Common myeloid progenitor, CD34-positive (primary cell): ENCODE measurements at regions of chr4 and their contacts with region 1.

Region 1: GRCh38 chr4:128191115-128191781 is 96.4 kb downstream of the PGRMC2 start:
- DNase-seq: peak; percentile 76 to 94 (median 92)
- H3K4me3 ChIP-seq: no peak overlapping the region
- H3K27ac ChIP-seq: no peak overlapping the region
- H3K4me1 ChIP-seq: no peaks in the 10 kb centered on the region
- H3K27me3 ChIP-seq: no peaks in the 10 kb centered on the region

Region 2: GRCh38 chr4:128076465-128076864 is 114.8 kb before region 1 on chr4:
- CTCF ChIA-PET with region 1: no interaction called
- POLR2A ChIA-PET with region 1: no interaction called
- DNase-seq: no peak
- H3K4me3 ChIP-seq: no peak overlapping the region
- H3K27ac ChIP-seq: no peak overlapping the region
- H3K4me1 ChIP-seq: no peaks in the 10 kb centered on the region
- H3K27me3 ChIP-seq: no peaks in the 10 kb centered on the region

Region 3: GRCh38 chr4:128204901-128205300 is 13.7 kb after region 1 on chr4:
- CTCF ChIA-PET with region 1: interaction called, 10 read pairs
- POLR2A ChIA-PET with region 1: no interaction called
- DNase-seq: no peak
- H3K4me3 ChIP-seq: no peak overlapping the region
- H3K27ac ChIP-seq: no peak overlapping the region
- H3K4me1 ChIP-seq: no peaks in the 10 kb centered on the region
- H3K27me3 ChIP-seq: no peaks in the 10 kb centered on the region

Region 4: GRCh38 chr4:128287871-128288688 is 96.8 kb after region 1 on chr4:
- CTCF ChIA-PET with region 1: no interaction called
- POLR2A ChIA-PET with region 1: no interaction called
- DNase-seq: peak; percentile 99 to 100 (median 100)
- H3K4me3 ChIP-seq: peak overlapping the region; percentile 69 to 97 (median 81)
- H3K27ac ChIP-seq: peak overlapping the region; percentile 50 to 83
- H3K4me1 ChIP-seq: peaks cover 13 to 37% (median 29%) of the 10 kb centered on the region in 4 experiments
- H3K27me3 ChIP-seq: no peaks in the 10 kb centered on the region